Ascending aorta (tissue), 2 donors: ENCODE measurements at regions of chr11 and their contacts with region 1.

Region 1: GRCh38 chr11:62108017-62108750 is 15.6 kb upstream of the INCENP start:
- DNase-seq: no peak
- H3K4me3 ChIP-seq: no peak overlapping the region
- H3K27ac ChIP-seq: no peak overlapping the region
- H3K4me1 ChIP-seq: peaks cover 13 to 34% of the 10 kb centered on the region in 2 donors
- H3K27me3 ChIP-seq: no peaks in the 10 kb centered on the region
- CTCF ChIP-seq: peak; percentile 82

Region 2: DNA sequence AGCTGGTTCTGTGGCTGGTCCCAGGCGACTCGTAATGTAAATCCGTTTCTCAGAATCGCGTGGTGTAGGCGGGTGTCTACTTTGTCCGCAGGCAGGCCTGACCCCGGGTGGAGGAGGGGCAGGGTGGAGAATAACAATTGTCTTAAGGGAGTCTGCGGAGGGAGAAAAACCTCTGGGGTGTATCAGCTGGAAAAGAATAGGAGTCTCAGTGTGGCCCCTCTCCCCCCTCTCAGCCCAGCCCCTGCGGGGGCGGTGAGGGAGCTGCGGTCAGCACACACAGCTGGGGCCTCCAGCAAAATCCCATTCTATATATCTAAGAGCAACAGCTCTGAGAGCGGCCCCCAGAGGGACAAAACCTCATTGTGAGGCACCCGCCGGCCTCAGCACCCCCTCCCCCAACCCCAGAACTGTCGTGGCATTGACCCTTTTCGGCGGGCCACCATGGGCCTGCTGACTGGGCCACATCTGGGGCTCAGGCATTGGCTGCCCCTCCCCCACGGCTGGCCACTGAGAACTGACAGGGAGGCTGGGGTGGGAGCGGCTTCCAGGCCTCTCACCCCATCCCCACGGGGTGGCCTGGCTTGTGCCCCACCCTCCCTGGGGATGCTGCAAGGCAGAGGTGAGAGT is 358.5 kb before region 1 on chr11:
- intact Hi-C with region 1: loop called (anchors 2 kb)
- DNase-seq: no peak
- H3K4me3 ChIP-seq: no peak overlapping the region
- H3K27ac ChIP-seq: no peak overlapping the region
- H3K4me1 ChIP-seq: peaks cover 3 to 8% of the 10 kb centered on the region in 2 donors
- H3K27me3 ChIP-seq: no peaks in the 10 kb centered on the region
- CTCF ChIP-seq: no peak

Region 3: DNA sequence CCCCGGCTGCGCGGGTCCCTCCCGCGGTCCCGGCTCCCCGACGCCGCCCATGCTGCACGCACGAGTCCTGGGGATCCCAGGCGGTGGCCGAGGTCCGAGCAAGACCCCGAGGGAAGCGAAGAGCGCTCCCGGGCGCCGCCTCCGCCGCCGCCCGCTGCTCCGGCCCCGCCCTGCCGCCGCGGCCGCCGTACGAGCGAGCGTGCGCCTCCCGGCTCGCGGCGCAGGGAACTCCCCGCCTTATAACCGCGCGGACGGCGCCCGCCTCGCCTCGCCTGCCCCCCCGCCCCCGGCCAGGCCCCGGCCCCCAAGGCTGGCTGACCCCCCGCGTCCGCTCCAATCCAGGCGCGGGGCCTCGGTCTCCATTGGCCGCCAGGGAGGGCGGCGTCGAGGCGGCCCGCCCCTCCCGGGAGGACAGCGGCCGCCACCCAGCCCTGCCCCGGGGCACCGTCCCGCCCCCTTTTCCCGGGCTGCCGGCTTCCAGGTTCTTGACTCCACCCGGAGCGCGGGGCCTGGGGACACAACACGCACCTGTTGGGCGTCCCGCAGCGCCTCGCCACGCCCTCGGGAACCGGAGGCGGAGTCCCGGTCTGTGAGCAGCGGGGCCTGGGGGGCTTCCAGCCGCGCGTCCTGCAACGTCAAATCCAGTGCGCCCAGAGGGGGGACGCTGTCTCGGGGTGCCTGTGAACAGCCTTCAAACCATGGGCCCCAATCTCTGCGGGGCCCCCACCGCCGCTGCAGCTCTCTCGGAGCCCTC is 216.7 kb before region 1 on chr11 and contains the start of gene FADS3:
- intact Hi-C with region 1: loop called (anchors 2 kb)
- DNase-seq: peak; percentile 80 to 96
- H3K4me3 ChIP-seq: peak within 1 kb of the TSS; percentile 99
- H3K27ac ChIP-seq: peak within 1 kb of the TSS; percentile 90 to 98
- H3K4me1 ChIP-seq: peaks cover 22 to 30% of the 10 kb centered on the region in 2 donors
- H3K27me3 ChIP-seq: no peaks in the 10 kb centered on the region
- CTCF ChIP-seq: no peak
- total RNA-seq, gene FADS3: 191 TPM

Region 4: GRCh38 chr11:61947486-61948210 is 160.5 kb before region 1 on chr11:
- intact Hi-C with region 1: loop called (anchors 2 kb)
- DNase-seq: peak; percentile 69 to 96
- H3K4me3 ChIP-seq: no peak overlapping the region
- H3K27ac ChIP-seq: peak overlapping the region in 1 of 2 donors; percentile 39
- H3K4me1 ChIP-seq: peaks cover 3 to 11% of the 10 kb centered on the region in 2 donors
- H3K27me3 ChIP-seq: no peaks in the 10 kb centered on the region
- CTCF ChIP-seq: peak; percentile 91 to 94 (median 94)

Region 5: GRCh38 chr11:61978703-61979661 is 129.2 kb before region 1 on chr11:
- intact Hi-C with region 1: no loop called
- DNase-seq: no peak
- H3K4me3 ChIP-seq: no peak overlapping the region
- H3K27ac ChIP-seq: peak overlapping the region; percentile 69 to 80
- H3K4me1 ChIP-seq: peaks cover 23 to 26% of the 10 kb centered on the region in 2 donors
- H3K27me3 ChIP-seq: no peaks in the 10 kb centered on the region
- CTCF ChIP-seq: no peak

Region 6: GRCh38 chr11:62004473-62004872 is 103.7 kb before region 1 on chr11:
- intact Hi-C with region 1: no loop called
- DNase-seq: peak; percentile 59 to 91
- H3K4me3 ChIP-seq: no peak overlapping the region
- H3K27ac ChIP-seq: peak overlapping the region; percentile 75 to 78
- H3K4me1 ChIP-seq: peaks cover 0 to 10% of the 10 kb centered on the region in 2 donors
- H3K27me3 ChIP-seq: no peaks in the 10 kb centered on the region
- CTCF ChIP-seq: no peak

Region 7: DNA sequence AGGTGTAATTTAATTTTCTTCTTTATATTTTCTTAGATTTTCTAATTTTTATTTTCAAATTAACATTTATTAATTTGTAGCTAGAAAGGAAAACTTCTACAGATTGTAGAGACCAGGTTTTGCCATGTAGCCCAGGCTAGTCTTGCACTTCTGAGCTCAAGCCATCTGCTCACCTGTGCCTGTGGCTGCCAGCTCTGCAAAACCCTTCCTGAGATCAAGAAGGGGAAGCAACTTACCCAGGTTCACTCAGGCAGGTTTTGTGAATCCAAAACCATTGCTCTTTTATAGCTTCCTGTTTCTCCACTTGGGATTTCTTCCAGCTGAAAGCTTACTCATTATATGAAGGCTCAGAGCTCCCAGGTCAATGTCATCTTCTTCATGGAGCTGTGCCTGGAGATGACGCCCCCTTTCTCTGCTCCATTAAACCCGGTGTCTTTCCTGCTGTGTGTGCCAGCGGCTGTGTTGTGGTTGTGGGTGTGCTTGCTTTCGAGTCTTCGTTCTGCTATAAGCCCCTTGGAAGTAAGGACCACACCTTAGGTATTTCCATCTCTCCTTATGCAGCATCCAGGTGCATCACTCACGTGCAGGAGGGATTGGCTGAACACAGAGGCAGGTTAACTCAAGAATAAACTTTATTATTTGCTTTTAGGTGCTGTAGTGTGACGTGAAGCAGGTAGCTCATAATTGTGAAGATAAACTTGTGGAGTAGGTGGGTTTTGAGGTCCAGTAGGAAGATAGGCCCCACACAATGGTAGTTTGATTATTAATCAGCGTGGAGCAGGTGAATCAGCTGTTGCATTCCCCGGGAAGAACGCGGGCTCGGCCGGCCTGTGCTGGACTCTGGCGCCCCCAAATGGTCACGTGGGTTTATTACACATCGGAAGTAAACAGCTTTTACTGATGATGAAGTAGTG is 26.5 kb before region 1 on chr11:
- intact Hi-C with region 1: loop called (anchors 2 kb)
- DNase-seq: peak; percentile 21 to 89
- H3K4me3 ChIP-seq: peak overlapping the region in 1 of 2 donors; percentile 5
- H3K27ac ChIP-seq: no peak overlapping the region
- H3K4me1 ChIP-seq: no peaks in the 10 kb centered on the region
- H3K27me3 ChIP-seq: no peaks in the 10 kb centered on the region
- CTCF ChIP-seq: peak; percentile 90 to 94 (median 93)